ENCODE measurements at regions of chr6 and their contacts with region 1.

Region 1: GRCh38 chr6:26234421-26235296 is 130.3 kb upstream of the BTN3A2 start:
- DNase-seq: no peak

Region 2: GRCh38 chr6:26065952-26066380 is 168.7 kb before region 1 on chr6:
- intact Hi-C with region 1: no loop called
- DNase-seq: no peak

Region 3: GRCh38 chr6:26204332-26205165 is 30.1 kb before region 1 on chr6:
- intact Hi-C with region 1: no loop called
- DNase-seq: peak; percentile 96

Region 4: DNA sequence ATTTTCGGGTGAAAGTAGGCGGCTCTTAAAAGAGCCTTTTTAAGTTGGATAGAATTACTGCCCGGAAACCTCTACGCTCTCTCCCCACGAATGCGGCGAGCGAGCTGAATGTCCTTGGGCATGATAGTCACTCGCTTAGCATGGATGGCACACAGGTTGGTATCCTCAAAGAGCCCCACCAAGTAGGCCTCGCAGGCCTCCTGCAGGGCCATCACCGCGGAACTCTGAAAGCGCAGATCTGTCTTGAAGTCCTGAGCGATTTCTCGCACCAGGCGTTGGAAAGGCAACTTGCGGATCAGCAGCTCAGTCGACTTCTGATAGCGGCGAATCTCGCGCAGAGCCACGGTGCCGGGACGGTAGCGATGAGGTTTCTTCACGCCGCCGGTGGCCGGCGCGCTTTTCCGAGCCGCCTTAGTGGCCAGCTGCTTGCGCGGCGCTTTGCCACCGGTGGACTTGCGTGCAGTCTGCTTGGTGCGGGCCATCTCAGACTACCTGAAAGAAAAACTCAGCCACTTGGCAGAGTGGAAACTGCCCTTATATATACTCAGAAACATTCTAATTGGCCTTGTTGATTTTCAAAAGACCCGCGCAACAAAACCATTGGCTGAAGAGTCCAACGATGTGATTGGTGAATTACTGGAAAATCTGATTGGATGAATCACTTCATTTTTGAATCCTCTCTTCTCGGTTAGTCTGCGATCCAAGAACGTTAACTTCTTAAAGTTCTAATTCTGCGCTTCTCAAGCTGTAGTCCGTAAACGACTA is 36.4 kb after region 1 on chr6:
- intact Hi-C with region 1: loop called (anchors 5 kb)
- DNase-seq: no peak